WTC11 (cell line): ENCODE measurements at regions of chr1 and their contacts with region 1.

Region 1: GRCh38 chr1:212455803-212456528 is 23.2 kb downstream of the NENF start:
- DNase-seq: peak; percentile 93
- ATAC-seq: peak; percentile 79
- H3K4me3 Mint-ChIP-seq: no peak overlapping the region
- H3K27ac Mint-ChIP-seq: no peak overlapping the region
- H3K4me1 Mint-ChIP-seq: no peaks in the 10 kb centered on the region
- H3K27me3 Mint-ChIP-seq: no peaks in the 10 kb centered on the region
- CTCF ChIP-seq: peak; percentile 99

Region 2: DNA sequence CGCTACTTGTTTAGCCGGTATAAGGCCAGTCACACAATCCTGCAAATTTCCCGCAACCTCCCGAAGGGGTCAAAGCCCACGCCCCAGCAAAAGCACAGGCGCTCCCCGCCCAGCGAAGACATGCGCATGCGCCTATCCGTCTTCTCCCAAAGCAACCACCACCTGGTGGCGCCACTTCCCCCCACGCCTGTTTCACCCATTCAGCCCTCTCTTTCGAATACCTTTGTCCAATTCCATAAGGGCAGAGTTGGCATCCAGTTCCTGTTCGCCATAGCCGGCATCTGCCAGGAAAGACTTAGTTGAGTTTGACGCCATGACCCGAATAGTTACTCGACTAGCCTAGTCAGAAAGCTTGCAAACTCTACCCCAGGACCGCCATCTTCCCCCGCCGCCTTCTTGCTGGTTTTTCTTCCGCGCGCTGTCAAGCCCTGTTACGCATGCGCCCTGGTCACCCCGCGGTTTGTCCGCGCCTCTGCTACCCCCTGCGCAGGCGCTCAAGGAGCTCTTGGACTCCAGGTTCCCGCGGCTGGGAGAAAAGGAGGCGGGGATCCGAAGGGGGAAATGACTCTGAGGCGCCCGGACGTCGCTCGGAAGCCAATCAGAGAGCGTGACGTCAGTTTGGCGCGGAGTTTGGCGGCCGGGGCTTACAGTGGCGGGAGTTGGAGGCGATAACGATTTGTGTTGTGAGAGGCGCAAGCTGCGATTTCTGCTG is 420.7 kb before region 1 on chr1 and contains the starts of genes DTL and INTS7:
- CTCF ChIA-PET with region 1: interaction called, 18 read pairs
- POLR2A ChIA-PET with region 1: interaction called, 3 read pairs
- DNase-seq: peak; percentile 98
- ATAC-seq: peak; percentile 92
- H3K4me3 Mint-ChIP-seq: peak within 1 kb of the TSS; percentile 98
- H3K27ac Mint-ChIP-seq: peak within 1 kb of the TSS; percentile 99
- H3K4me1 Mint-ChIP-seq: peaks cover 32% of the 10 kb centered on the region
- H3K27me3 Mint-ChIP-seq: peaks cover 3% of the 10 kb centered on the region; the same call in 1 of the 2 replicates
- CTCF ChIP-seq: peak; percentile 66; the same call in 1 of the 2 replicates
- total RNA-seq, gene DTL: 38.8 to 52.3 TPM (median 43.0 TPM) in 3 replicates
- total RNA-seq, gene INTS7: 16.3 to 17.3 TPM (median 17.2 TPM) in 3 replicates

Region 3: GRCh38 chr1:212368073-212368484 is 87.9 kb before region 1 on chr1:
- CTCF ChIA-PET with region 1: interaction called, 50 read pairs
- POLR2A ChIA-PET with region 1: no interaction called
- DNase-seq: peak; percentile 59
- ATAC-seq: peak; percentile 96
- H3K4me3 Mint-ChIP-seq: no peak overlapping the region
- H3K27ac Mint-ChIP-seq: no peak overlapping the region
- H3K4me1 Mint-ChIP-seq: no peaks in the 10 kb centered on the region
- H3K27me3 Mint-ChIP-seq: no peaks in the 10 kb centered on the region
- CTCF ChIP-seq: peak; percentile 76

Region 4: GRCh38 chr1:212432706-212433576 is 23.0 kb before region 1 on chr1 and contains the start of gene NENF:
- CTCF ChIA-PET with region 1: interaction called, 21 read pairs
- POLR2A ChIA-PET with region 1: no interaction called
- DNase-seq: peak; percentile 67
- ATAC-seq: peak; percentile 96
- H3K4me3 Mint-ChIP-seq: peak within 1 kb of the TSS; percentile 74
- H3K27ac Mint-ChIP-seq: no peak within 1 kb of the TSS; the same call in 1 of the 2 replicates
- H3K4me1 Mint-ChIP-seq: peaks cover 16% of the 10 kb centered on the region
- H3K27me3 Mint-ChIP-seq: peaks cover 4% of the 10 kb centered on the region; the same call in 1 of the 2 replicates
- CTCF ChIP-seq: no peak
- total RNA-seq, gene NENF: 26.2 to 28.1 TPM (median 27.3 TPM) in 3 replicates

Region 5: DNA sequence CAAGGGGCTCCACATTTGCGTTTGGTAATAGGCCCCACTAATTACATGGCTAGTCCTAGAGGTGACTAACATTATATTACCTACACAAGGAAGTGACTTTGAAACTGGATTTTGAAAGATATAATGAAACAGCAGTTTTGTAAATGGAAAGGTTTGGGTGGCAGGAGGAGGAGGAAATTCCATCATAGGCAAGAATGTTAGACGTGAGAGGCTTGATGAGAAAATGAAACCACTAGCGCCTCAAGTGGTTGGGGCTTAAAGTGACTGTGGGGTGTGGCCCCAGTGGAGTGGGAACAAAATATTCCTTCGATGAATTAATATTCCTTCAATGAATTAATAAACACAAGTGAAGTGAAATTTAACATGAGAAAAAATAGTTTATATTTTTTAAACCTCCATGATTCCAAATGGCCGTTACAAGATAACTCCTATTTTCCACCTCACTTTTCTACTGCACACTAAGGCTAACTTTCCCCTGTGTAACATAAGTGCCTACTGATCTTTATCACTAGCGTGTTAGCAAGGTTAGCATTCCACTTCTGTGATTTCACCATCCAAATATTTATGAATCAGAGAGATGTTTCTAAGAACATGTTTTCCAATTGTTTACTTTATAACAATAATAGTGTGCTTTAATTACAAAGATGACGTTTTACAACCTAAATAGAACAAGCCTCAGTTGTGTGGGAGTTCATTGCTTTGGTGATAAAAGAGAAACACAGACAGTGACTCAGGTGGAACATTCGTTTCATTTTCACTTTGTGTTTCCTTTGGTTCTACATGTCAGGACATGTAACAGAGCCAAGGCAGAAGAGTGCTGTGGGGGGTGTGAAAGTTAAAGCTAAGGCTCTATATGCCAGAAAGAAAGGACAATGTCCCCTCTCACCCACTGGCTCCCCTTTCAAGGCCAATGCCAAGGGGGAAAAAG is 140.1 kb after region 1 on chr1:
- CTCF ChIA-PET with region 1: interaction called, 12 read pairs
- POLR2A ChIA-PET with region 1: no interaction called
- DNase-seq: peak; percentile 39
- ATAC-seq: peak; percentile 76
- H3K4me3 Mint-ChIP-seq: no peak overlapping the region
- H3K27ac Mint-ChIP-seq: peak overlapping the region; percentile 54; the same call in 1 of the 2 replicates
- H3K4me1 Mint-ChIP-seq: peaks cover 21% of the 10 kb centered on the region
- H3K27me3 Mint-ChIP-seq: peaks cover 14% of the 10 kb centered on the region
- CTCF ChIP-seq: peak; percentile 47

Region 6: GRCh38 chr1:212678456-212679410 is 222.8 kb after region 1 on chr1:
- CTCF ChIA-PET with region 1: interaction called, 13 read pairs
- POLR2A ChIA-PET with region 1: no interaction called
- DNase-seq: no peak
- ATAC-seq: peak; percentile 35
- H3K4me3 Mint-ChIP-seq: no peak overlapping the region
- H3K27ac Mint-ChIP-seq: no peak overlapping the region
- H3K4me1 Mint-ChIP-seq: peaks cover 11% of the 10 kb centered on the region
- H3K27me3 Mint-ChIP-seq: peaks cover 5% of the 10 kb centered on the region; the same call in 1 of the 2 replicates
- CTCF ChIP-seq: no peak

Region 7: GRCh38 chr1:212782422-212783154 is 326.6 kb after region 1 on chr1:
- CTCF ChIA-PET with region 1: no interaction called
- POLR2A ChIA-PET with region 1: no interaction called
- DNase-seq: no peak
- ATAC-seq: peak; percentile 32; the same call in 1 of the 2 replicates
- H3K4me3 Mint-ChIP-seq: no peak overlapping the region
- H3K27ac Mint-ChIP-seq: no peak overlapping the region
- H3K4me1 Mint-ChIP-seq: no peaks in the 10 kb centered on the region
- H3K27me3 Mint-ChIP-seq: no peaks in the 10 kb centered on the region
- CTCF ChIP-seq: peak; percentile 37